Activated CD4-positive, alpha-beta T cell treated with anti-CD3 and anti-CD28 coated beads for 36 hours (primary cell): ENCODE measurements at regions of chr1 and their contacts with region 1.

Region 1: DNA sequence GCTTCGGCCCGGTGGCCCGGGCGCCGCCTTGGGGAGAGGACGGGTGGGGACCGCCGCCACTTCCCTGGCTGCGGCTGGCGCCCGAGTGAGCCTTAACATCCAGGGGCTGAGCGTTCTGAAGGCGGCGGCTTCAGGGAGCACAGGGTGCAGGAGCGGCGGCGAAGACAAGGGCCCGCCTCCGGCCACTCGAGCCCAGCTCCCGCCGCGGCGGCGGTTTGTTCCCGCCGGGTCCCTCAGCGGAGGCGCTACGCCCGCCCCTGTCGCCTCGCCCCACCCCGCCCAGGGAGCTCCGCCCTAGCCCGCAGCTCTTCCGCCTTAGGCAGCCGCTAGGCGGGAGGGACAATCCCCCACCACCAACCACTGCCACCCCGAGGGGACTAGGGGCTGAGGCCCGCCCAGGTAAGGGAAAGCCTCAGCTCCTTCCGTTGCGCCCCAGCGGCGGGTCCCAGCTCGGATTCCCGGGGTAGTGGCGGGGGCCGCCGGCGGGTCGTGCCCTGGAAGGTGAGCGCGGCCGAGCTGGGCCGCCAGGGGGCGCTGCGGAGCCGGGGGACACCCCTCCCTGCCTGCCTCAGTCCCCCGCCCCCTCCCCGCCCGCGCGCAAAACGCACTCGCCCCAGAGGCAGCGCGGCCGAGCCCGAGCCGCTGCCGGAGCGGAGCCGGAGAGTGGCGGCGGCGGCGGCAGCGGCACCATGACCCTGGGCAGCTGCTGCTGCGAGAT is at the start of gene FOXD2:
- DNase-seq: peak; percentile 95
- ATAC-seq: peak; percentile 90
- H3K4me3 Mint-ChIP-seq: peak within 1 kb of the TSS; percentile 92
- H3K27ac Mint-ChIP-seq: peak within 1 kb of the TSS; percentile 73
- H3K4me1 Mint-ChIP-seq: peaks cover 24% of the 10 kb centered on the region
- H3K27me3 Mint-ChIP-seq: peaks cover 26% of the 10 kb centered on the region
- total RNA-seq, gene FOXD2: 0.05 to 0.07 TPM

Region 2: DNA sequence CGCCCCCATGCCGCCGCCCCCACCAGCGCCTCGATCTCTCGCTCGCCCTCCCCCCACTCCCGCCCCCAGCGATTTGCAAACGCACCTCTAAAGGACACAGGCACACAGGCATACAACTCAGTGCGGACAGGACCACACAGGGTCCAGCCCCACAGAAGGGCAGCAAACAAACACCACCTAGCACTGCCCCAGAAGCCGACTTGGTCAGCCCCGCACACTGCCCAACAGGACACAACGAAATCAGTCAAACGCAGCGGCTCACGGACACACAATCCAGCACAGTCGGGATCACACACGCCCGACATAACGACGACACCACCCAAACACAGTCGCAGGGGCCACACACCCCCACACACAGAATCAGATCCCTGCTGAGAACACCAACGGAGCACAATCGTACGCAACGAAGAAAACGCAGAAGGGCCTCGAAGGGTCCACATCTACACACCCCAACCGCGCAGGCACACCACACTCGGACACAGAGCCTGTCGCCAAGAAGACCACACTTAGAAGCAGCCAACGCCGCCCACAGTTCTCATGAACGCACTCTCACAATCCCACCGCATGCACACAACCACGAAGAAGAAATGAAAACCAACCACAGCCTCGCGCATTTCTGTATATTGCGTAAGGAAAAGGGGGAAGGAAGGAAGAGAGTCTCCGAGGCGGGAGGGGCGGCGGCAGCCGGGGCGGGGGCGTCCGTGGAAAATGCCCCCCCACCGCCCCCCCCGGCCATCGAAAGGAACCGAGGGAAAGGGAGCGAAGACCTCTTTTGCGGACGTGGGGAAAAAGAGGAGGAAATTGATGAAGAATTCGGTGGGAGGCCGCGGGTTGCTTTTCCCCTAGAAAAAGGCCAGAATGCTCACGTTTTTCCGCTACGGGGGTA is 206.1 kb before region 1 on chr1:
- CTCF ChIA-PET with region 1: interaction called, 3 read pairs
- POLR2A ChIA-PET with region 1: no interaction called
- intact Hi-C with region 1: loop called (anchors 2 to 10 kb)
- DNase-seq: peak; percentile 43
- ATAC-seq: peak; percentile 28
- H3K4me3 Mint-ChIP-seq: peak overlapping the region; percentile 73
- H3K27ac Mint-ChIP-seq: peak overlapping the region; percentile 48
- H3K4me1 Mint-ChIP-seq: peaks cover 24% of the 10 kb centered on the region
- H3K27me3 Mint-ChIP-seq: peaks cover 73% of the 10 kb centered on the region

Region 3: DNA sequence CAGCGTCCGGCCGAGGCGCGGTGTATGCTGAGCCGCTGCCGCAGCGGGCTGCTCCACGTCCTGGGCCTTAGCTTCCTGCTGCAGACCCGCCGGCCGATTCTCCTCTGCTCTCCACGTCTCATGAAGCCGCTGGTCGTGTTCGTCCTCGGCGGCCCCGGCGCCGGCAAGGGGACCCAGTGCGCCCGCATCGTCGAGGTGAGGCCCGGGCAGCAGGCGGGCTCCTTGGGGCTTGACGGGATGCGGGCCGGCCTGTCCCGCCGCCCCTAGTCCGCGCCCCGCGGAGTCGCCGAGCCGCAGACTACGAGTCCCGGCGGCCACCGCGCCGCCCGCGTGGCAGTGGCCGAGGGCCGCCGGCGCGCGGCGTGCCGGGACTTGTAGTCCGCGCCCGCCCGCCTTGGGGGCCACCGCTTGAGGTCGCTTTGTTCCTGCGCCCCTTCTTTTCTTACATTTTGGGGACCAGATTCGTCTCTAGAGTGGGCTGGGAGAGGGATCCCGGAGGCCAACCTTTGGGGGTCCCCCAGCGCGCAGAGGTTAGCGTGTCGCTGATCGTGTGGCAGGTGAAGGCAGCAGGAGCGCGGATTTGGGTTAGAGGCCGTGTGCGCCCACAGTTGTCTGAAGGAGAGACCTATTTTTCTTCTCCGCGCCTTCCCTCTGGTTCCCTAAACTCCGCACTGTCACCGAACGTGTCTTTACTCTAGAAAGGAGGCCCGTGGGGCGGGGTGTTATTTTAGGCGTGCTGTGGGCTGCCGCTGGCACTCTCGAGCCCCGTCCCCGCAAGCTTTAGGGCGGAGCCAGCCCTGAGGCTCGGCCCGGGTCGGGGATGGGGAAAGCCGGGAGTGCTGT is 103.5 kb before region 1 on chr1:
- CTCF ChIA-PET with region 1: interaction called, 7 read pairs
- POLR2A ChIA-PET with region 1: no interaction called
- intact Hi-C with region 1: loop called (anchors 1 kb)
- DNase-seq: peak; percentile 85
- ATAC-seq: peak; percentile 90
- H3K4me3 Mint-ChIP-seq: no peak overlapping the region
- H3K27ac Mint-ChIP-seq: peak overlapping the region; percentile 88
- H3K4me1 Mint-ChIP-seq: peaks cover 23% of the 10 kb centered on the region
- H3K27me3 Mint-ChIP-seq: no peaks in the 10 kb centered on the region

Region 4: GRCh38 chr1:47415728-47416318 is 21.8 kb before region 1 on chr1 and contains the start of gene FOXE3:
- CTCF ChIA-PET with region 1: interaction called, 11 read pairs
- POLR2A ChIA-PET with region 1: no interaction called
- intact Hi-C with region 1: no loop called
- DNase-seq: no peak
- ATAC-seq: no peak
- H3K4me3 Mint-ChIP-seq: peak within 1 kb of the TSS; percentile 39
- H3K27ac Mint-ChIP-seq: peak within 1 kb of the TSS; percentile 20
- H3K4me1 Mint-ChIP-seq: peaks cover 5% of the 10 kb centered on the region
- H3K27me3 Mint-ChIP-seq: peaks cover 40% of the 10 kb centered on the region
- total RNA-seq, gene FOXE3: not detected

Region 5: GRCh38 chr1:47507881-47508701 is 70.5 kb after region 1 on chr1:
- CTCF ChIA-PET with region 1: interaction called, 3 read pairs
- POLR2A ChIA-PET with region 1: no interaction called
- intact Hi-C with region 1: loop called (anchors 2 kb)
- DNase-seq: peak; percentile 63
- ATAC-seq: peak; percentile 74
- H3K4me3 Mint-ChIP-seq: peak overlapping the region; percentile 44
- H3K27ac Mint-ChIP-seq: no peak overlapping the region
- H3K4me1 Mint-ChIP-seq: peaks cover 8% of the 10 kb centered on the region
- H3K27me3 Mint-ChIP-seq: peaks cover 74% of the 10 kb centered on the region

Region 6: DNA sequence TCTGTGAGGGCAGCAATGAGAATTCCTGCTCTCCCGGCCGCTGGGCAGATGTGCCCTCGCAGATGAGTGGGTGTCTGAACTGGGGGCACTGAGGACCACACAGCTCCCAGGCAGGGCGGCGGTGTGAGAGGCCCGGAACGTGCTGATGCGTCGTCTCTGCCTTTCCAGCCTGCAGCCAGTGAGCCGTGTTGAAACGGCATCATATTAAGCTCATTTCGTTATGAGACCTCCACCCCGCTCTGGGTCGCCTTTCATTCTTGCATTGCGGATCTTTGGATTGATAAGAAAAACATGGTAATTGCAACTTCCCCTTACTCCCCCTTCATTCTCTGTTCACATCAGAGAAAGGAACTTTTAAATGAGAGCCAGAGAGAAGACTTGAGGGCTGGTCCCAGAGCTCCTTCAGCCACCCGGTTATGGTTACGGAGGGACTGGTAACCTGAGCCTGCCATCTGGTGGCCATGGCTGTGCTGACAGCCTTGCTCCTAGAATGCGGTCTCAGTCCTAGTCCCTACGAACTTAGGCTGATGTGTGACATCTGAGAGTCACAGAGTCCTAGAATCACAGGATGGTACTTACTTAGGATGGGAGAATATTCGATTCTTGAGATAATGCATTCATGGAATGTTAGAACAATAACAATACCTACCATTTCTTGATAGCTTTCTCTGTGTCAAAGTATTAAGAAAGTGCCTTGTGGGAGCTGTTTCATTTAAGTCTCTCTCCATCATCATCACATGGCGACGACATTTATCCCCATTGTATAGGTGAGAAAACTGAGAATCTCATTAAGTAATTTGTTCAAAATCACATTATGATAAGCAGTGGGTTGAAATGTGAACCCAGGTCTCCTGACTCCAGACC is 288.6 kb after region 1 on chr1:
- CTCF ChIA-PET with region 1: interaction called, 12 read pairs
- POLR2A ChIA-PET with region 1: interaction called, 6 read pairs
- intact Hi-C with region 1: loop called (anchors 1 kb)
- DNase-seq: peak; percentile 83
- ATAC-seq: peak; percentile 91
- H3K4me3 Mint-ChIP-seq: peak overlapping the region; percentile 15
- H3K27ac Mint-ChIP-seq: no peak overlapping the region
- H3K4me1 Mint-ChIP-seq: peaks cover 14% of the 10 kb centered on the region
- H3K27me3 Mint-ChIP-seq: peaks cover 57% of the 10 kb centered on the region

Region 7: GRCh38 chr1:48471691-48472576 is 1034.3 kb after region 1 on chr1 and contains the start of gene SPATA6:
- CTCF ChIA-PET with region 1: no interaction called
- POLR2A ChIA-PET with region 1: no interaction called
- intact Hi-C with region 1: loop called in 1 of 2 experiments (anchors 5 kb)
- DNase-seq: peak; percentile 99
- ATAC-seq: peak; percentile 97
- H3K4me3 Mint-ChIP-seq: peak within 1 kb of the TSS; percentile 78
- H3K27ac Mint-ChIP-seq: peak within 1 kb of the TSS; percentile 49
- H3K4me1 Mint-ChIP-seq: peaks cover 25% of the 10 kb centered on the region
- H3K27me3 Mint-ChIP-seq: peaks cover 8% of the 10 kb centered on the region
- total RNA-seq, gene SPATA6: 2.8 to 3.3 TPM